Aorta (tissue), 5 donors: ENCODE measurements at regions of chr17 and their contacts with region 1.

Region 1: GRCh38 chr17:57868007-57868909 is 18.4 kb upstream of the MRPS23 start:
- DNase-seq: peak; percentile 92 to 96
- ATAC-seq: peak; percentile 91
- H3K4me3 ChIP-seq: no peak overlapping the region
- H3K27ac ChIP-seq: peak overlapping the region in 1 of 2 donors; percentile 87
- H3K4me1 ChIP-seq: no peaks in the 10 kb centered on the region
- H3K27me3 ChIP-seq: no peaks in the 10 kb centered on the region

Region 2: DNA sequence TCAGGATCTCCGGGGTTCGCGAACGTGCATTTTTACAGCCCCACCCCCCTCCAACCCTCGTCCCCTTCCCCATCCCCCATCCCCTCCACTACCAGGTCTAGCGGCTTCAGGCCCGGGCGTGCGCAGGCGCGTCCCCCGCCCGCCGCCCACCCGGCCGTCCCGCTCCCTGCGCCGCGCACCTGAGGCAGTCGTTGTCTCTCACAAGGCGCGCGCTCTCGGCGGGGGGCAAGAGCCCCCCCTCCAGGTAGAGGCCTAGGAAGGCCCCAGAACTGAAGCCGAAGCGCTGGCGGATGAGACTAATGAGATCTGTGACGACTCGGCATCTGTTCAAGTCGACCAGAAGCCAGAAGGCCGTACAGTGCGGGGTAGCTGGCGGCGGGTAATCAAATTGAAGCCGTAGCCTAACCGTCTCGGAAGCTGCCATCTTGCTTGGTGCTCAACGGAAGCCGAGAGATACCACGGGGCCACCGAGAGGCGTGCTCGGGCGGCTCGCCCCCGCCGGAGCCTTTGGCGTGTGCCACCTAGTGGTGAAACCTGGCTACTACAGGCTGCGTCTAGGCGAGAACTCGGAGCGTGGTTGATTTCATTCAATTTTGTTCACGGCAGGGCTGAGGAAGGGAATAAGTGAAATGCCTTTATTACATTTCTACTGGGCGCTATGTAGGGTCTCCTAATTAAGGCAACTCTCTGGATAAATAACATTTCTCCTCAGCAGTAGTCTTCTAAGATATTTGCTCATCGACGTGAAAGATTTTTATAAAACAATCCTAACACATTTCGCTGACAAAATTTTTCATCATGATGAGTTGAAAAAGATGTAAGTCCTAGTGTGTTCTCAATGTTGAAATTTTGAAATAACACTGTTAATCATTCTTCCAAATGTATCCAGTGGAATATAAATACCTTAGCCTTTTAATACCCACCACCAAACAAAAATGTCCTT is 907.4 kb before region 1 on chr17 and contains the start of gene COIL:
- intact Hi-C with region 1: no loop called
- DNase-seq: peak; percentile 95 to 97
- ATAC-seq: peak; percentile 99
- H3K4me3 ChIP-seq: peak within 1 kb of the TSS; percentile 99 to 100
- H3K27ac ChIP-seq: peak within 1 kb of the TSS in 1 of 2 donors; percentile 74
- H3K4me1 ChIP-seq: no peaks in the 10 kb centered on the region
- H3K27me3 ChIP-seq: no peaks in the 10 kb centered on the region
- total RNA-seq, gene COIL: 10.8 to 12.0 TPM

Region 3: DNA sequence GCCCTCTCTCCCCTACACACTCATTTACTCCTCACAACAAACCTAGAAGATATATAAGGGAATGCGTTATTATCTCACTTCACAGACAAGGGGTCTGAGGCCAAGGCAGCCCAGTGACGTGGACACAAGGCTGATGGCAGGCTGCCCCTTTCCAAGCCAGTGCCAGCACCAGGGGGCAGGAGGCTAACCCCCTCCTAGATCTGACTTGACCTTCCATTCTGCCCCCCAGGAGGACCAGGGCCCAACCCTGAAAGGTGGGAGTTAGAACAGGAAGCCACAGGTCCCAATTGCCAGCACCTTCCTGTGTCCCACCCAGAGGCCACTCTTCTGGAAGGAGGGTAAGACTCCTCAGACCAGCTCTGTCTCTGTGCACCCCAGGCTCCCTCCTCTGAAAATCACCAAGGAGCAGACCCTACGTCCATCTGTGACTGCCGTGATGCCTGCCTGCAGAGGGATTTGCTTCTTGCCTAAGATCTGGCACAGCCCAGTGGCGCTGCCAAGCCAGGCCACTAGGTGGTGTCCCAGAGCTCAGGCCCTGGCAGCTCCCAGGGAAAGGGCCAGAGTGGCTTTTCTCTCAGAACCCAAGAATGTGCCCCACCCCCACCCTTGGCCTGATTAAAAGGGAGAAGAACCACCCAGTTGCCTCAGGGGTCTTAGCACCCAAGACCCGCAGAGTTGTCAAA is 24.0 kb after region 1 on chr17:
- intact Hi-C with region 1: loop called in 1 of 2 experiments (anchors 2 kb)
- DNase-seq: peak; percentile 91 to 94
- ATAC-seq: peak; percentile 84
- H3K4me3 ChIP-seq: no peak overlapping the region
- H3K27ac ChIP-seq: peak overlapping the region; percentile 83 to 99
- H3K4me1 ChIP-seq: peaks cover 4 to 9% of the 10 kb centered on the region in 2 donors
- H3K27me3 ChIP-seq: no peaks in the 10 kb centered on the region